Tibial artery (tissue), 4 donors: ENCODE measurements at regions of chr1 and their contacts with region 1.

Region 1: GRCh38 chr1:28329395-28330153 is 734 bp downstream of the MED18 start:
- DNase-seq: peak; percentile 21 to 67
- H3K4me3 ChIP-seq: peak overlapping the region; percentile 61 to 68
- H3K27ac ChIP-seq: peak overlapping the region; percentile 77 to 82
- H3K4me1 ChIP-seq: peaks cover 0 to 17% (median 8%) of the 10 kb centered on the region in 4 donors
- H3K27me3 ChIP-seq: no peaks in the 10 kb centered on the region
- CTCF ChIP-seq: no peak

Region 2: DNA sequence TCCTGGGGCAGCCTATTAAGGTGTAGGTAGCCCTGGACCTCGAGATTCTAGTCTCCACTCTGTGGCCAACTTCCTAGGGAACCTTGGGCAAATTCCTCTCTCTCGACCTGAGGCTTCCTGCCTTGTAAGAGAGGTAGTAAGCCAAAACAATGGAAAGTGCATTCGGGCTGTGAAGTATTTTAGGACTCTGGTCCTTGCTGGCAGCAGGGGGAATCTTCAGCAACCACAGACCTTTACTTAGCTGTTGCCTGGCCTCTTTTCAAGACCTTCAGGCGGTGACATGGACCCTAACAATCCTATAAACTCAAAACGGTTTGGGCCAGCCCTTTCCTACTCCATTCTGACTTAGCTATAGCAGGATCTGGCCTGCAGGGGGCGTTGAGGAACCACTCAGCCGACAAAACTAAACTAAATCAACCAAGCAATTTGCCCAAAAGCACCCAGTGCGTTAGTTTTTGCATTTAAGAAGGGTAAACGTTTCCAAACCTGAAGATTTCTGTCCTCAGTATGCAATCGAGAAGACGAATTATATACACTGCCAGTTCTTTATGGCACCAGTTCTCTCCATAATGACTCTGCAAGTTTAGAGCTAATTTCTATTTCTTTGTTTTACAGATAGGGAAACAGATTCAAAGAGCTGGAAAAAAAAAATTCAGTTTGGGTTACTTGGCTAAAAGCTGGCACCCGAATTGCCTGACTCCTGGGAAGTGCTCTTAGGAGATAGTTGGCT is 81.1 kb before region 1 on chr1:
- intact Hi-C with region 1: loop called (anchors 5 kb)
- DNase-seq: peak; percentile 88 to 90
- H3K4me3 ChIP-seq: no peak overlapping the region
- H3K27ac ChIP-seq: peak overlapping the region; percentile 65 to 77
- H3K4me1 ChIP-seq: peaks cover 0 to 33% (median 23%) of the 10 kb centered on the region in 4 donors
- H3K27me3 ChIP-seq: peaks cover 0 to 4% of the 10 kb centered on the region in 2 donors
- CTCF ChIP-seq: peak; percentile 84 to 88

Region 3: GRCh38 chr1:29218223-29218622 is 888.6 kb after region 1 on chr1:
- intact Hi-C with region 1: no loop called
- DNase-seq: no peak
- H3K4me3 ChIP-seq: no peak overlapping the region
- H3K27ac ChIP-seq: no peak overlapping the region
- H3K4me1 ChIP-seq: no peaks in the 10 kb centered on the region
- H3K27me3 ChIP-seq: no peaks in the 10 kb centered on the region
- CTCF ChIP-seq: no peak